ENCODE measurements at regions of chr20 and their contacts with region 1.

Region 1: DNA sequence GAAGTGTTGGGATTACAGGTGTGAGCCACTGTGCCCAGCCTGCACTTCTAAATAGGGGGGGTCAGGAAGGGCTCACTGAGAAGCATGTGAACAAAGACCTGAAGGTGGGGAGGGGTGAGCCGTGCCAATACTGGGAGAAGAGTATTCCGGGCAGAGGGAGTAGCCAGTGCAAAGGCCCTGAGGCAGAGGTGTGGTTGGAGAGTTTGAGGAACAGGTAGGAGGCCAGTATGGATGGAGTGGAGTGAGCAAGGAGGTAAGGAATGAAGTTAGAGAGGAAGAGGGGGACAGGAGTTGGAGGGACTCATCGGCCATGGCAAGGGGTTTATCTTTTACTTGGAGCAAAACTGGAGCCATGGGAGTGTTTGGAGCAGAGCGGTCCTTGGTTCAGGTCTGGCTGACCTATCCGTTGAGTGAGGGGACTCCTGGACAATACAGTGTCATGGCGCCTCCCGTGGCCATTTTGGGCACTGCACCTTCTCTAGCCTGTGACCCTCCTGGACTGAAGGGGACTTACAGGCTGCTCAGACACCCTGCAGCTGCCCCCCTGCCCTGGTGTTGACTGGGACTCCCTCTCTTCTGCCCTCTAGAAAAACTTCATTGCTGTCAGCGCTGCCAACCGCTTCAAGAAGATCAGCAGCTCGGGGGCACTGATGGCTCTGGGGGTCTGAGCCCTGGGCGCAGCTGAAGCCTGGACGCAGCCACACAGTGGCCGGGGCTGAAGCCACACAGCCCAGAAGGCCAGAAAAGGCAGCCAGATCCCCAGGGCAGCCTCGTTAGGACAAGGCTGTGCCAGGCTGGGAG is 12.1 kb downstream of the FOXS1 start:
- DNase-seq: peak; percentile 74
- ATAC-seq: peak; percentile 83
- H3K4me3 ChIP-seq: no peak overlapping the region
- H3K27ac ChIP-seq: no peak overlapping the region
- H3K4me1 ChIP-seq: peaks cover 31% of the 10 kb centered on the region
- H3K27me3 ChIP-seq: peaks cover 2 to 6% of the 10 kb centered on the region in 2 experiments; a peak in 3 of 5 replicates
- CTCF ChIP-seq: peak; percentile 87
- EP300 ChIP-seq: no peak
- POLR2A ChIP-seq: no peak
- RAD21 ChIP-seq: peak; percentile 54; the same call in 1 of the 2 replicates

Region 2: GRCh38 chr20:31845300-31845863 is 12.1 kb after region 1 on chr20 and contains the start of gene FOXS1:
- CTCF ChIA-PET with region 1: interaction called, 11 read pairs
- POLR2A ChIA-PET with region 1: interaction called, 4 read pairs
- in situ Hi-C with region 1: no loop called
- intact Hi-C with region 1: no loop called
- DNase-seq: no peak
- ATAC-seq: no peak; the same call in 2 of the 3 replicates
- H3K4me3 ChIP-seq: no peak within 1 kb of the TSS
- H3K27ac ChIP-seq: no peak within 1 kb of the TSS
- H3K4me1 ChIP-seq: peaks cover 8% of the 10 kb centered on the region; the same call in 1 of the 2 replicates
- H3K27me3 ChIP-seq: peaks cover 22 to 79% of the 10 kb centered on the region in 2 experiments
- CTCF ChIP-seq: no peak
- EP300 ChIP-seq: no peak
- POLR2A ChIP-seq: no peak
- RAD21 ChIP-seq: no peak
- total RNA-seq, gene FOXS1: not detected in 2 replicates

Region 3: GRCh38 chr20:31933698-31934097 is 100.4 kb after region 1 on chr20:
- CTCF ChIA-PET with region 1: no interaction called
- POLR2A ChIA-PET with region 1: no interaction called
- in situ Hi-C with region 1: no loop called
- intact Hi-C with region 1: no loop called
- DNase-seq: no peak
- ATAC-seq: peak; percentile 18; the same call in 1 of the 3 replicates
- H3K4me3 ChIP-seq: no peak overlapping the region
- H3K27ac ChIP-seq: no peak overlapping the region
- H3K4me1 ChIP-seq: no peaks in the 10 kb centered on the region
- H3K27me3 ChIP-seq: peaks cover 0 to 15% of the 10 kb centered on the region in 2 experiments; a peak in 2 of 5 replicates
- CTCF ChIP-seq: no peak
- EP300 ChIP-seq: no peak
- POLR2A ChIP-seq: no peak
- RAD21 ChIP-seq: no peak

Measured in HepG2 (cell line).